SK-N-SH (cell line): ENCODE measurements at regions of chr1 and their contacts with region 1.

Region 1: GRCh38 chr1:58515794-58516401 is 30.6 kb downstream of the OMA1 start:
- DNase-seq: peak; percentile 64
- H3K4me3 ChIP-seq: peak overlapping the region in 1 of 2 experiments; percentile 21; a peak in 1 of 4 replicates
- H3K27ac ChIP-seq: no peak overlapping the region
- H3K4me1 ChIP-seq: no peaks in the 10 kb centered on the region
- H3K27me3 ChIP-seq: no peaks in the 10 kb centered on the region
- CTCF ChIP-seq: peak; percentile 85
- EP300 ChIP-seq: no peak
- RAD21 ChIP-seq: peak; percentile 91

Region 2: DNA sequence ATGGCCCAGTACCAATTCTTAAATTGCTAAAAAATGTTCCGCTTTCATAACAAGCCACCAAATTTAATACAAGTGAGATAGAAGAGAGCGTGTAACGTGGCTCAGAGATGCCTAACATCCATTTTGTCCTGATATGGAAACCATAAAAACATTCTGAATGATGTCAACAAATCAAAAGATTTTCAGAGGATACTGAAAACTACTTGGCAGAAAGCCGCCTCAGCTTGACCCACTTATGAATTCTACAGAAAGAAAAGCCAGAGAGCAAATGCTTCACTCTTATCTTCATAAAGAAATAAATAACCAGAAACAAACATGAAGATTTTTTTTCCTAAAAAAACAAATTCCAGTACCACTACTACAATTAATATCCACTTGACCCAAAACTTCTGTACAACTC is 10.6 kb before region 1 on chr1:
- CTCF ChIA-PET with region 1: interaction called, 13 read pairs
- POLR2A ChIA-PET with region 1: no interaction called
- DNase-seq: no peak
- H3K4me3 ChIP-seq: no peak overlapping the region
- H3K27ac ChIP-seq: no peak overlapping the region
- H3K4me1 ChIP-seq: peaks cover 0 to 3% of the 10 kb centered on the region in 2 experiments; a peak in 3 of 4 replicates
- H3K27me3 ChIP-seq: no peaks in the 10 kb centered on the region
- CTCF ChIP-seq: no peak
- EP300 ChIP-seq: no peak
- RAD21 ChIP-seq: no peak

Region 3: GRCh38 chr1:58528518-58528917 is 12.6 kb after region 1 on chr1:
- CTCF ChIA-PET with region 1: interaction called, 39 read pairs
- POLR2A ChIA-PET with region 1: no interaction called
- DNase-seq: no peak
- H3K4me3 ChIP-seq: no peak overlapping the region
- H3K27ac ChIP-seq: no peak overlapping the region
- H3K4me1 ChIP-seq: no peaks in the 10 kb centered on the region; a peak in 1 of 4 replicates
- H3K27me3 ChIP-seq: no peaks in the 10 kb centered on the region
- CTCF ChIP-seq: no peak
- EP300 ChIP-seq: no peak
- RAD21 ChIP-seq: no peak

Region 4: DNA sequence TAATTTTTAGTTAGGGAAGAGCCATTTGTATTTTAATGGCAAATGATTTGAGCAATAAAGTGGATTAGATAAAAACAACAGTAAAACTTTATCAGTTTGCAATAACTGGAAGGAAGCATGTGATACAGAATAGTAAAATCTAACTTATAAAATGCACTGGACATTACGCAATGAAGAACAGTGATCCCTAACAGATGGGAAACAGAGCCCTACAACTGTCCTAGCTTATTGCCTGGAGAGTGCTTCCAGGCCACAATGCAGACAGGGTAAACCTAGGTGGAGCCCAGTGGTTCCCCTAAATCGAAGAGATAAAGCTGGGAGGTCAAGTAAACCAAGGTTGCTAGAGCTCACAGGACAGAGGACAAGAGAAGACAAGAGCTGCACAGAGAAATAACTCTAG is 23.7 kb after region 1 on chr1:
- CTCF ChIA-PET with region 1: interaction called, 67 read pairs
- POLR2A ChIA-PET with region 1: no interaction called
- DNase-seq: no peak
- H3K4me3 ChIP-seq: no peak overlapping the region
- H3K27ac ChIP-seq: no peak overlapping the region
- H3K4me1 ChIP-seq: no peaks in the 10 kb centered on the region; a peak in 2 of 4 replicates
- H3K27me3 ChIP-seq: no peaks in the 10 kb centered on the region
- CTCF ChIP-seq: no peak
- EP300 ChIP-seq: no peak
- RAD21 ChIP-seq: no peak

Region 5: DNA sequence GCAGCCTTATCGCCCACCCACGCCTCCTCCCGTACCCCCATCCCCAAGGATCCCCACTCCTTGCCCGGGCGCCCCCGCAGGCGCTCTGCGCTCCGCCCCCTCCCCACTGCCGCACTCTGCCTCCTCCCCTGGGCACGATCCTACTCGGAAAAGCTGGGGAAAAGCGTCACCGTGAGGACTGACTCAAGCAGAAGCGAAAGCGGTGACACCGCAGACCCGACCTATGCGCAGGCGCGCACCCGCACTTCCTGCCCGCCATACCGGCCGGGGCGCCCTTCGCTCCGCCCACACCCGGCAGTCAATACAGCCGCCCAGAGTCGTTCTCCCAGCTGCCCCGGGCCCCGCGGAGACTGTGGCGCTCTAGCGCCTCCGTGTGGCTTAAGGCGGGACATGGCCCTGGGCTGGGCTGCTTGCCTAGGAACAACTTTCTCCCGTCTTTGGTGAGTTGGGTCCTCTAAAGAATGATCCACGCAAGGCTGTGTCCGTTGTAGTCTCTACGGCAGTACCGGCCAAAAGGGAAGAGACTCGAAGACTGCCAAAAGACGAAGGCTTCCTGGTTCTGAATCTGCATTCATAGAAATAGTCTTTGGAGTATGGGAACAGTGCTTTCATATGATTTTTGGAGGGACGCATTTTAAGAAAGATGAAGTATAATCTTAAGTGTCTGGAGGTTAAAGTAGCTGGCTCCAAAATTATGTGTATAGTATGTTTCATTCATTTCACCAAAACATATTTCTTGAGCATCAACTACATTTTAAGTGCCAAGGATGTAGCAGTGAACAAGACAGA is 30.8 kb after region 1 on chr1 and contains the start of gene OMA1:
- CTCF ChIA-PET with region 1: interaction called, 67 read pairs
- POLR2A ChIA-PET with region 1: no interaction called
- DNase-seq: peak; percentile 96
- H3K4me3 ChIP-seq: peak within 1 kb of the TSS; percentile 66 to 69
- H3K27ac ChIP-seq: peak within 1 kb of the TSS; percentile 87 to 93
- H3K4me1 ChIP-seq: peaks cover 2 to 3% of the 10 kb centered on the region in 2 experiments; a peak in 2 of 4 replicates
- H3K27me3 ChIP-seq: no peaks in the 10 kb centered on the region
- CTCF ChIP-seq: peak; percentile 95
- EP300 ChIP-seq: no peak; a peak in 1 of 4 replicates
- RAD21 ChIP-seq: peak; percentile 86
- polyA plus RNA-seq, gene OMA1: 6.9 and 9.1 TPM in 2 replicates

Region 6: GRCh38 chr1:58618303-58618702 is 102.4 kb after region 1 on chr1:
- CTCF ChIA-PET with region 1: interaction called, 13 read pairs
- POLR2A ChIA-PET with region 1: no interaction called
- DNase-seq: no peak
- H3K4me3 ChIP-seq: no peak overlapping the region
- H3K27ac ChIP-seq: peak overlapping the region; percentile 34 to 53; a peak in 3 of 4 replicates
- H3K4me1 ChIP-seq: peaks cover 0 to 7% of the 10 kb centered on the region in 2 experiments; a peak in 2 of 4 replicates
- H3K27me3 ChIP-seq: no peaks in the 10 kb centered on the region
- CTCF ChIP-seq: no peak
- EP300 ChIP-seq: peak; percentile 9 to 43; a peak in 1 of 4 replicates
- RAD21 ChIP-seq: no peak

Region 7: GRCh38 chr1:58670181-58670580 is 154.3 kb after region 1 on chr1:
- CTCF ChIA-PET with region 1: no interaction called
- POLR2A ChIA-PET with region 1: no interaction called
- DNase-seq: no peak
- H3K4me3 ChIP-seq: no peak overlapping the region
- H3K27ac ChIP-seq: no peak overlapping the region
- H3K4me1 ChIP-seq: no peaks in the 10 kb centered on the region
- H3K27me3 ChIP-seq: no peaks in the 10 kb centered on the region
- CTCF ChIP-seq: no peak
- EP300 ChIP-seq: no peak
- RAD21 ChIP-seq: no peak